H1 (cell line): ENCODE measurements at regions of chr4 and their contacts with region 1.

Region 1: DNA sequence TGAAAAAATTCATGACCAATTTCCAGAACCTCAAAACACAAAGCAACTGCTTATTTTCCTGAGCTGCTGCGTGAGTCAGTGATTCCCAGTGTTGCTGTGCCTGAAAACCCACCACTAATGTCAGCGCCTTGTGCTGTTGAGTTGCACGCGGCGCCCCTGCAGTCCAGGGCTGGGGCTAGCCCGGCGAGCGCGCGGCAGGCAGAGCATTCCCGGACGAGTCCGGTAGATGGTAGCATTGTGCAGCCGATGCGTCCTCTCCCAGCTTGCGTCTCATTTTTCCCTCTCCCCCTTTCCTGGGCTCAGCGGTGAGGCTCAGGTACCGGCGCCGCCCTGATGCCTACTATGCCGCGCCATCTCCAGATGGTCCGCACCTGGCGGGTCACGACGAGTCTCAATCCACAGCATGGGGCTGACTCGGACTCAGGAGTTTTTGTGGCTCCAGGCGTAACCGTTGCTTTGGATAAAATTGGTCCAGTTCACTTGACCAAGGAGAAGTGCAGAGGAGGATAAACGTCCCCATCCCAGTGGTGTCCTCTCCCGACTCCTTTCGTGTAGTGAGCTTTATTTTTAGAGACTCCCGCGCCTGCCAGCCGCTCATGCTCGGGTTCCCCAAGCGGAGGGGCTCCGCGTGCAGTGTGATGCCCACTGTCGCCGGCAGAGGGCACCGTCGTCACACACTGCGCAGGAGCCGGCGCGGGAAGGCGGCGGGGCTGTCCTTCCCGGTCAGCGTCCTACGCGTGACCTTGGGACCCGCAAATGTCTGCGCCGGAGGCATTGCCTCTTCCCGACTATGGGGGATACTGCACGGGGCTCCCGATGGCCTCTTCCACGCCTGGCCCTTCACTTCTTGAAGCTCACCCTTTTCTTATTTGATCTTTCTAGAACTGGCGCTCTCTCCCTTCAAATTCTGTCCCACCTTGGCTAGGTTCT is 53.6 kb upstream of the IGFBP7 start:
- DNase-seq: peak; percentile 83 to 95
- H3K4me3 ChIP-seq: peak overlapping the region; percentile 33 to 64 (median 60); a peak in 7 of 8 replicates
- H3K27ac ChIP-seq: no peak overlapping the region; the same call in 1 of the 2 replicates
- H3K4me1 ChIP-seq: peaks cover 0 to 3% (median 1%) of the 10 kb centered on the region in 4 experiments; a peak in 2 of 7 replicates
- H3K27me3 ChIP-seq: peaks cover 0 to 10% (median 9%) of the 10 kb centered on the region in 4 experiments; a peak in 4 of 7 replicates
- CTCF ChIP-seq: peak; percentile 95 to 97 (median 96)
- EP300 ChIP-seq: no peak
- POLR2A ChIP-seq: no peak
- RAD21 ChIP-seq: peak; percentile 97 to 98

Region 2: DNA sequence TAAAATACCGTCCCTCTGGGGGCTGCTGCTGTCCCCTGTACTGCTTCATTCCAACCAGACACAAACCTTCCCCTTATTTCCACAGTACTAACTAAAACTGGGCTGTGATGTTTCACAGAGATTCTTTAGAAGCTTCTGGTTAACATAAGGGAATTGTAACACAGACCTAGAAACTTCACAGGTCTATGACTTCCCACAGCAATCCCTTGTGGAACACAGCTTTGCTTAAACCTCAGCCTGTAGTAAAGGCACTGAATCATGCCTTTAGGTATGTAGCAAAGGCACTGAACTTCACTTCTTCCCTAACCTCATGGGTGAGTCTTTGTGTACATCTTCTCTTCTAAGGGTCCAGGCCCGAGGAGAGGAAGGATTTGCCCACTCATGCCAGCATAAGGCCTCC is 391.7 kb before region 1 on chr4:
- CTCF ChIA-PET with region 1: no interaction called
- POLR2A ChIA-PET with region 1: no interaction called
- DNase-seq: no peak
- H3K4me3 ChIP-seq: no peak overlapping the region
- H3K27ac ChIP-seq: no peak overlapping the region
- H3K4me1 ChIP-seq: peaks cover 0 to 7% (median 3%) of the 10 kb centered on the region in 4 experiments; a peak in 2 of 7 replicates
- H3K27me3 ChIP-seq: no peaks in the 10 kb centered on the region
- CTCF ChIP-seq: no peak
- EP300 ChIP-seq: no peak
- POLR2A ChIP-seq: no peak
- RAD21 ChIP-seq: no peak

Region 3: GRCh38 chr4:56977321-56978012 is 186.3 kb before region 1 on chr4 and contains the start of gene NOA1:
- CTCF ChIA-PET with region 1: no interaction called
- POLR2A ChIA-PET with region 1: no interaction called
- DNase-seq: peak; percentile 96 to 98
- H3K4me3 ChIP-seq: peak within 1 kb of the TSS; percentile 85 to 92 (median 90)
- H3K27ac ChIP-seq: peak within 1 kb of the TSS; percentile 40
- H3K4me1 ChIP-seq: peaks cover 0 to 4% (median 0%) of the 10 kb centered on the region in 4 experiments; a peak in 3 of 7 replicates
- H3K27me3 ChIP-seq: no peaks in the 10 kb centered on the region; a peak in 1 of 7 replicates
- CTCF ChIP-seq: no peak
- EP300 ChIP-seq: no peak
- POLR2A ChIP-seq: peak in 1 of 2 experiments; percentile 87; a peak in 2 of 3 replicates
- RAD21 ChIP-seq: no peak
- total RNA-seq, gene NOA1: 28.1 and 28.5 TPM in 2 replicates

Region 4: DNA sequence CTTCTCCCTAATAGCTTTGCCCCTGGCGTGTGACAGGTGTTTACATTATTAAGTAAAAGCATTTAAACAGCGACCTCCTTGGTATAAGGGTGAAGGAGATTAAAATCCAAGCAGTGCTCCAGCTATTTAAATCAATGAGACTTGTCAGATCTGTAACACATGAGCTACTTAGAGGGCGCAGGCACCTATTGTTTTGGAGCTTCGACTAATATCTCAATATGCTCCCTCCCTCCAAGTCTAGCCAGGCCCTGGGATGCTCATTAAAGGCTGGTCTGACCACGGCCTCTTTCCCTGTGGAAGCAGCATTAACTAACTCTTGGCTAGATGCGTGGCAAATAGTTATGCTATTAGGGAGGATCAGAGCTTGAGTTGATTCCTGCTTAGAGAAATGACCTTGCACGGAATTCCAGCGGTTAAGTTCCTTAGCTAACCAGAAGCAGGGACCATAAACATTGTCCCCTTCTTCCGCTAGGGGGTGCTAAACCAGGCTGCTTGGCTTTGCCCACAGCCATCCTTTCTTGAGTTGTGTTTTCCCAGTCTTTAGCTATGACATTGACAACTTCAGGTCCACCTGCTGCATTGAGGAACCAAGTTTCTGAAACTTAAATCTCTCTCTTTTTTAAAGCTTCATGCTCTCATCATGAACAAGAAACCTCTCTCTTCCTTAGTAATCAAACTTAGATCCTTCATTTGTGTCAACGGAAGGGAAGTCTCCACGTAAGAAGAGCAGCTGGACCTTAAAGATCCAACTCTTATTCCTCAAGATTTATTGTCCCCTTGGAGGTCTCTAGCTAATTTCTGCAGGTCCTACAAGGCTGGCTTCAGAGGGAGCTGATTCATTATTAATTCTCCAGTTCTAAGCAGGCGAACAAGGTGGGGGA is 27.0 kb after region 1 on chr4:
- CTCF ChIA-PET with region 1: interaction called, 91 read pairs
- POLR2A ChIA-PET with region 1: interaction called, 3 read pairs
- DNase-seq: peak; percentile 57 to 88
- H3K4me3 ChIP-seq: peak overlapping the region in 1 of 4 experiments; percentile 10; a peak in 1 of 8 replicates
- H3K27ac ChIP-seq: no peak overlapping the region
- H3K4me1 ChIP-seq: peaks cover 12 to 42% (median 22%) of the 10 kb centered on the region in 4 experiments
- H3K27me3 ChIP-seq: peaks cover 2 to 20% (median 11%) of the 10 kb centered on the region in 4 experiments; a peak in 6 of 7 replicates
- CTCF ChIP-seq: peak; percentile 66 to 96 (median 79)
- EP300 ChIP-seq: no peak
- POLR2A ChIP-seq: no peak
- RAD21 ChIP-seq: peak; percentile 58 to 68

Region 5: GRCh38 chr4:57291911-57292310 is 128.1 kb after region 1 on chr4:
- CTCF ChIA-PET with region 1: interaction called, 12 read pairs
- POLR2A ChIA-PET with region 1: no interaction called
- DNase-seq: no peak
- H3K4me3 ChIP-seq: no peak overlapping the region
- H3K27ac ChIP-seq: no peak overlapping the region
- H3K4me1 ChIP-seq: peaks cover 0 to 7% (median 5%) of the 10 kb centered on the region in 4 experiments; a peak in 4 of 7 replicates
- H3K27me3 ChIP-seq: peaks cover 0 to 3% (median 0%) of the 10 kb centered on the region in 4 experiments; a peak in 1 of 7 replicates
- CTCF ChIP-seq: no peak
- EP300 ChIP-seq: no peak
- POLR2A ChIP-seq: no peak
- RAD21 ChIP-seq: no peak

Region 6: GRCh38 chr4:57410331-57411052 is 246.7 kb after region 1 on chr4:
- CTCF ChIA-PET with region 1: interaction called, 31 read pairs
- POLR2A ChIA-PET with region 1: no interaction called
- DNase-seq: no peak
- H3K4me3 ChIP-seq: no peak overlapping the region
- H3K27ac ChIP-seq: no peak overlapping the region
- H3K4me1 ChIP-seq: no peaks in the 10 kb centered on the region
- H3K27me3 ChIP-seq: no peaks in the 10 kb centered on the region
- CTCF ChIP-seq: no peak
- EP300 ChIP-seq: no peak
- POLR2A ChIP-seq: no peak
- RAD21 ChIP-seq: no peak

Region 7: DNA sequence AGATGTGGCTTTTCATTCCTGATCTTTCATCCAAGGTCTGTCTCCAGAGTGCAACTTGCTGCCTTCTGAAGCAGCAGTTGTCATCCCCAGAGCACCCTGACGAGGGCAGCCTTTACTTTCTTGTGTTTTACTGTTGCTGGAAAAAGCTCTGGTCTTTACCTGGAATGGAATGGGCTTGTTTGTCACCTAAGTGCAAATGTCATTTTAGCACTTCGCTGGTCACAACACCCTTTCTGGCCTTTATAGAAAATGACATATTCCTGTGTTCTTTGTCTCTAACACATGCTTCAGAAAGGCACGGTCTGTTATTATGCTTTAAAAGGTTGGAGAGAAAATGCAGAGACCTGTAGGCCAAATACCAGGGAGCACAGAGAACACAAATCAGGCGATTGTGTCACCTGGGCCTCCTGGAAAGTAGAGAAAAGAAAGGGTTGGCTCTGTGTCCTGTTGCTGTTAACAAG is 279.1 kb after region 1 on chr4:
- CTCF ChIA-PET with region 1: interaction called, 55 read pairs
- POLR2A ChIA-PET with region 1: no interaction called
- DNase-seq: peak; percentile 39 to 80
- H3K4me3 ChIP-seq: no peak overlapping the region
- H3K27ac ChIP-seq: no peak overlapping the region
- H3K4me1 ChIP-seq: no peaks in the 10 kb centered on the region
- H3K27me3 ChIP-seq: no peaks in the 10 kb centered on the region
- CTCF ChIP-seq: peak; percentile 76 to 94 (median 77)
- EP300 ChIP-seq: no peak
- POLR2A ChIP-seq: no peak
- RAD21 ChIP-seq: peak; percentile 98